ENCODE measurements at regions of chr2 and their contacts with region 1.

Region 1: DNA sequence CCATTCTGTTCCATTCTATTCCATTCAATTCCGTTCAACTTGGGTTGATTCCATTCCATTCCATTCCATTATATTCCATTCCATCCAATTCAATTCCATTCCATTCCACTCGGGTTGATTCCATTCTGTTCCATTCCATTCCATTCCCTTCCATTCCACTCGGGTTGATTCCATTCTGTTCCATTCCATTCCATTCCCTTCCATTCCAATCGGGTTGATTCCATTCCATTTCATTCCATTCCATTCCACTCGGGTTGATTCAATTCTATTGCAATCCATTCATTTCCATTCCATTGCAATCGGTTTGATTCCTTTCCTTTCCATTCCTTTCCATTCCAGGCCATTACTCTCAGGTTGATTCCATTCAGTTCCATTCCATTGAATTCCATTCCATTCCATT is 1138.4 kb downstream of the RPIA start:
- DNase-seq: no peak
- H3K4me3 ChIP-seq: no peak overlapping the region
- H3K27ac ChIP-seq: no peak overlapping the region
- H3K4me1 ChIP-seq: no peaks in the 10 kb centered on the region
- CTCF ChIP-seq: no peak

Region 2: DNA sequence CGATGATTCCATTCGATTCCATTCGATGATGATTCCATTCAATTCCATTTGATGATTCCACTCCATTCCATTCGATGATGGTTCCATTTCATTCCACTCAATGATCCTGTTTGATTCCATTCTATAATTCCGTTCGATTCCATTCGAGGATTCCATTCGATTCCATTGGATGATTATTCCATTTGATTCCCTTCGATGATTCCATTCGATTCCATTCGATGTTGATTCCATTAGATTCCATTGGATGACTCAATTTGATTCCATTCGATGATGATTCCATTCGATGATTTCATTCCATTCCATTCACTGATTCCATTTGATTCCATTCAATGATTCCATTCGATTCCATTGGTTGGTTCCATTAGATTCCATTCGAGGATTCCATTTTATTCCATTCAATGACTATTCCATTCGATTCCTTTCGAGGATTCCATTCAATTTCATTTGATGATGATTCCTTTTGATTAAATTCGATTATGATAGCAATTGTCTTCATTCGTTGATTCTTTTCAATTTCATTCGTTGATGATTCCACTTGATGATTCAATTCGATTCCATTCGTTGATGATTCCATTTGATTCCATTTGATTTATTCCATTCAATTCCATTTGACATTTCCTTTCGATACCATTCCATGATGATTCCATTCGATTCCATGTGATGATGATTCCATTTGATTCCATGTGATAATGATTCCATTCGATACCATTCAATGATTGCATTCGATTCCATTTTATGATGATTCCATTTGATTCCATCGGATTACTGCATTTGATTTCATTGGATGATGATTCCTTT is 53.7 kb before region 1 on chr2:
- CTCF ChIA-PET with region 1: no interaction called
- POLR2A ChIA-PET with region 1: no interaction called
- intact Hi-C with region 1: loop called (anchors 5 kb)
- DNase-seq: no peak
- H3K4me3 ChIP-seq: no peak overlapping the region
- H3K27ac ChIP-seq: no peak overlapping the region
- H3K4me1 ChIP-seq: no peaks in the 10 kb centered on the region
- CTCF ChIP-seq: no peak